Naive thymus-derived CD4-positive, alpha-beta T cell (primary cell): ENCODE measurements at regions of chr3 and their contacts with region 1.

Region 1: DNA sequence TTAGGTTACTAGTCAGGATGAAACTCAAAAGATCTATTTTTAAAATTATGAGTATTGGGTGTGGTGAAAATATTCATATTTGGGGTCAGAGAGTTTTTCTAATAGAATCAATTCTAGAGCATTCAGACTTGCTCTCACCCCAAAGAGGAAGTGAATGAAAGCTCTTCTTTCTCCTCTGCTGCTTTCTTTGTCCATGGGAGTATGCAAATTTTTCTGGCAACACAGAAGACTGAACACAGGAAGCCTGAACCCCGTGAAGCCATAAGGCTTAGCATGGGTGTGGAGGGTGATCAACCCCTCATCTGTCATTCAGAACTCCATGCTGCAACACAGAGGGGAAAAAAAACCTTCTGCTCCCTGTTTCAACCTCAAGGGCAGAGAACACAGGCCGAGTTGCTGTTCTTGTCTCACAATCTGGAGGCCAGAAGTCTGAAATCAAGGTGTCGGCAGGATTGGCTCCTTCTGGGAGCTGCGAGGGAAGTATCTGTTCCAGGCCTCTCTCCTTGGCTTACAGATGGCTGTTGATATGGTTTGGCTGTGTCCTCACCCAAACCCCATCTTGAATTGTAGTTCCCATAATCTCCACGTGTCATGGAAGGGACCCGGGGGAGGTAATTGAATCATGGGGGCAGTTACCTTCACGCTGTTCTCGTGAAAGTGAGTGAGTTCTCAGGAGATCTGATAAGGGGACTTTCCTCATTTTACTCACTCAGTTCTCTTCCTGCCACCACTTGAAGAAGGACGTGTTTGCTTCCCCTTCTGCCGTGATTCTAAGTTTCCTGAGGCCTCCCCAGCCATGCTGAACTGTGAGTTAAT is 33.7 kb upstream of the CD47 start:
- DNase-seq: peak; percentile 33 to 88 (median 74)
- ATAC-seq: peak; percentile 79
- H3K4me3 ChIP-seq: peak overlapping the region; percentile 66
- H3K4me3 Mint-ChIP-seq: peak overlapping the region; percentile 82 to 98 (median 90)
- H3K27ac ChIP-seq: peak overlapping the region; percentile 89
- H3K27ac Mint-ChIP-seq: peak overlapping the region; percentile 92 to 99 (median 97)
- H3K4me1 ChIP-seq: peaks cover 48 to 56% of the 10 kb centered on the region in 2 donors
- H3K4me1 Mint-ChIP-seq: peaks cover 52 to 92% (median 68%) of the 10 kb centered on the region in 7 donors
- H3K27me3 ChIP-seq: no peaks in the 10 kb centered on the region
- H3K27me3 Mint-ChIP-seq: peaks cover 0 to 2% (median 0%) of the 10 kb centered on the region in 5 donors

Region 2: DNA sequence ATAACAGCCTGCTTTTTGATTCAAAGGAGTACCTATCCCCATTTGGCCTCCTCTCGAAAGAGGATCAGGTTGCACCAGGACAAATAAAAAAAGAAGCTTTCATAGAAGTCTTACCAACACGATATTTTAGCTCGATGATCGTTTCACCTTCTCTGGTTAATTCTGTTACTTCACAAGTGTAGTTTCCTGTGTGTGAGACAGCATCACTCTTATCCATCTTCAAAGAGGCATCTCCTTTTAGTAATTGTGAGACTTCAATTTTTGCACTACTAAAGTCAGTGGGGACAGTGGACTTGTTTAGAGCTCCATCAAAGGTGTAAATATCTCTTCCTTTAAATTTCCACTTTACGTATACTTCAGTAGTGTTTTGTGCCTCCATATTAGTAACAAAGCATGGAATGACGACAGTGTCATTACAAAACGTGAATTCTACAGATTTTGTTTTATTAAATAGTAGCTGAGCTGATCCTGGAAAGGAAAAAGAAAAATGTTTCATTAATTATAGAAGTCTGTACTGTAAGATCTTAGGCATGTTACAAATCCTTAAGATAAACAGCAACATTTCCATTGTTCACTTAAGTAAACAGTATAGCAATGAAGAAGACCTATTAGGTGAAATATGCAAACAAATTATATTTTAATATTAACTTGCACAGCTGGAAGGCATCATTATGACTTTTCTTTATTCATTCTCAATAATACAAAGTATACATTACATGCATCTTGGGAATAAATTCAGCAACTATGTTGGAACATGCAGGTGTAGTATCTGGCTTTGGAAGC is 44.5 kb before region 1 on chr3:
- CTCF ChIA-PET with region 1: no interaction called
- POLR2A ChIA-PET with region 1: interaction called, 393 read pairs
- intact Hi-C with region 1: no loop called
- DNase-seq: peak in 2 of 9 donors; percentile 18 to 22
- ATAC-seq: peak; percentile 62
- H3K4me3 ChIP-seq: no peak overlapping the region
- H3K4me3 Mint-ChIP-seq: peak overlapping the region in 8 of 10 donors; percentile 9 to 63 (median 56)
- H3K27ac ChIP-seq: peak overlapping the region; percentile 12
- H3K27ac Mint-ChIP-seq: peak overlapping the region; percentile 5 to 85 (median 59)
- H3K4me1 ChIP-seq: peaks cover 66 to 75% of the 10 kb centered on the region in 2 donors
- H3K4me1 Mint-ChIP-seq: peaks cover 9 to 57% (median 46%) of the 10 kb centered on the region in 7 donors
- H3K27me3 ChIP-seq: no peaks in the 10 kb centered on the region
- H3K27me3 Mint-ChIP-seq: no peaks in the 10 kb centered on the region

Region 3: DNA sequence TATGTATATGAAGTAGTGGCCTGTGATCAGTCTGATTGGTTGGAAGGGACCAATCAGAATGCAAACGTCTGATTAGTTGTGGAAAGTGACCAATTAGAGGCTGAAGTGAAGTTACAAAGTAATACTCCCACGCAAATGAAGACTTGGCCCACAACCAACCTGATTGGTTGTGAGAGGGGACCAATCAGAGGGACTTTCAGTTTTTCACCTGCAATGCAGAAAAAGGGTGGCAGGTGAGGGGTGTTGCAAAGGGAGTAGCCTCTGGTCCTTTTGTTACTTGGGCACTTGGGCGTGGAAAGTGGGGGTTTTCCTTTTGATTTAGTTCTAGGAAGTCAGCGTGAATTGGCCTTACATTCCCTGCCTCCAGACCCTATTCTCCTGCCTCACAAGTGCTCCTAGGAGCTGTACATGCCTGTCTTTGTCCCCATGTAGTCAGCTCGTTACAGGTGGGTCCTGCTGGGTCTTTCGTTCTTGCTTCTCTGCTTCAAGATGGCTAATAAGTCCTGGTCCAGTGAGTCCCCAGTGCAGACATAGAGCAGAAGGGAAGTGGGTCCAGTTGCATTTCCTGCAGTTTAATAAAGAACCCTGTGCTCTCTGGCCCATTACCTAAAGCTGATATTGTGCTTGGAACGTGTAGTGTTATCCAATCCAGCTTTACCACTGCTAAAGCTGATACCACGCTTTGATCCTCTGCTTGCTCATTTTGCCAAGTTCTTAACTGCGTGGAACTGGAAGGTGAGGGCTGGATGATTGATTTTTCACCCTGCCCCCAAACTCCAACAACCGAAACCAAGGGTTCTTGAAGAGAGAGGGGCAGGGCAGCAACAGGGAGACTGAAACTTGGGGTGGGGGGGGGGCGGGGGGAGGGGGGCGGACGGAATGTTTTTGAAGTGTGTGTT is 12.3 kb after region 1 on chr3:
- CTCF ChIA-PET with region 1: interaction called, 4 read pairs
- POLR2A ChIA-PET with region 1: interaction called, 12 read pairs
- intact Hi-C with region 1: loop called (anchors 1 kb)
- DNase-seq: no peak
- ATAC-seq: no peak
- H3K4me3 ChIP-seq: no peak overlapping the region
- H3K4me3 Mint-ChIP-seq: no peak overlapping the region
- H3K27ac ChIP-seq: no peak overlapping the region
- H3K27ac Mint-ChIP-seq: peak overlapping the region in 6 of 9 donors; percentile 37 to 98 (median 60)
- H3K4me1 ChIP-seq: peaks cover 15 to 29% of the 10 kb centered on the region in 2 donors
- H3K4me1 Mint-ChIP-seq: peaks cover 26 to 75% (median 61%) of the 10 kb centered on the region in 7 donors
- H3K27me3 ChIP-seq: no peaks in the 10 kb centered on the region
- H3K27me3 Mint-ChIP-seq: no peaks in the 10 kb centered on the region

Region 4: GRCh38 chr3:108589146-108589997 is 464.8 kb after region 1 on chr3 and contains the starts of genes CIP2A and DZIP3:
- CTCF ChIA-PET with region 1: no interaction called
- POLR2A ChIA-PET with region 1: interaction called, 6 read pairs
- intact Hi-C with region 1: loop called (anchors 1 to 10 kb)
- DNase-seq: peak; percentile 74 to 88 (median 82)
- ATAC-seq: peak; percentile 83
- H3K4me3 ChIP-seq: peak within 1 kb of the TSS; percentile 87
- H3K4me3 Mint-ChIP-seq: peak within 1 kb of the TSS; percentile 94 to 99 (median 98)
- H3K27ac ChIP-seq: peak within 1 kb of the TSS; percentile 92
- H3K27ac Mint-ChIP-seq: peak within 1 kb of the TSS; percentile 95 to 100 (median 99)
- H3K4me1 ChIP-seq: peaks cover 11 to 15% of the 10 kb centered on the region in 2 donors
- H3K4me1 Mint-ChIP-seq: peaks cover 12 to 53% (median 39%) of the 10 kb centered on the region in 7 donors
- H3K27me3 ChIP-seq: no peaks in the 10 kb centered on the region
- H3K27me3 Mint-ChIP-seq: no peaks in the 10 kb centered on the region
- total RNA-seq, gene CIP2A: 3.4 to 44.2 (median 4.1) TPM
- total RNA-seq, gene DZIP3: 9.6 to 17.3 (median 14.6) TPM